CD4-positive, alpha-beta memory T cell (primary cell): ENCODE measurements at regions of chr18 and their contacts with region 1.

Region 1: DNA sequence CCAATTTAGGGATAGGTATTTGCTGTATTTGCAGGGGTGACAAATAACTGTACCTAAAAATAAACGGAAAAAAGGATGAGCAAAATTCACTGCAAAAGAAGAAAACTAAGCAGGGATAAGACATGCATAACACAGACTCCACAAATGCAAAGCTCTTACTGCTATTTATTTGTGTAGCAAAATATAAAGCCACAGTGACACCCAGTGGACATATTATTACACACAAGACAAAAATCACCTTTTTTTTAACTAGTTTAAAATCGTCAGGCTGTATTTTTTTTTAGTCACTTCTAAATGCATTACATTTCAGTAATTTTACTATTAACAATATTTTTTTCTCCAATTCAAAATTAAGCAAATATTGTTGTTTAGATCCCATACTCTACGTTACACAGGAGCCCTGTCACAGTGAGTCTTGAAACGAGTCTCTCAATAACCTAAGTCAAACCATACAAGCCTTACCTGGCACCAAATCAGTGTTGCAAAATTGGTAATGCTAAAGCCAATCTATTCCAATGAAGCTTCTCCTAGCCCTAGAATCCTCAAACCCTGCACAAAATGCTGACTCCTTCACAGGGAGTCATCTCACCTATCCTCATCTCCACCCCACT is 23.7 kb downstream of the METTL4 start:
- DNase-seq: peak in 4 of 5 donors; percentile 31 to 40 (median 40)
- H3K4me3 ChIP-seq: no peak overlapping the region
- H3K4me3 Mint-ChIP-seq: no peak overlapping the region
- H3K27ac ChIP-seq: no peak overlapping the region
- H3K27ac Mint-ChIP-seq: peak overlapping the region in 3 of 7 donors; percentile 20 to 49 (median 48)
- H3K4me1 ChIP-seq: no peaks in the 10 kb centered on the region
- H3K4me1 Mint-ChIP-seq: peaks cover 14 to 17% (median 15%) of the 10 kb centered on the region in 4 donors
- H3K27me3 ChIP-seq: no peaks in the 10 kb centered on the region
- H3K27me3 Mint-ChIP-seq: no peaks in the 10 kb centered on the region

Region 2: DNA sequence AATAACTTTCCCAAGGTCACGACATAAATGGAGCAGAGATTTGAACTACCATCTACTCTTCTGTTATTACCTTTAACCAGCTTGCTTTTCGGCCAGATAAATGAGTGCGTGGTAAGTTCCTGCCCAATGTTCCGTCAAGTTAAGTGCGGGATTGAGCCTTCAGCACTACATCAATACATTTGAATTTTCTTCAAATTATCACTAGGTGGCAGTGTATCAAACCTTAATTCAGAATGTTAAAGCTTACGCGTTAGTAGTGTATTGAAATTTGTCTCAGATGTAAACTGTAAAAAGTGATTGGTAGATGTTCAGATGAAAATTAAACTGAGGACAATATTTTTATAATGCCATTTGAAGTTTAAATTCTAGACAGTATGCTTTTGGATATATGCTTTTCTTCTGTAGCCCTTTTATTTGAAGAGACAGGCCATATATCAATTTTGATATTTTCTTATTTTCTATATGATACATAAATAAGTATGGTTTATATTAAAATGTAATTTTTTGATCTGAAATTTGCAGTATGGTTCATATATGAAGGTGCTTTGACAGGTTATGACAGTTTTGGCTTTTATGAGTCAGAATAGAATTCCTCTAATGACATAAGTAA is 961.6 kb before region 1 on chr18:
- CTCF ChIA-PET with region 1: interaction called, 5 read pairs
- POLR2A ChIA-PET with region 1: no interaction called
- intact Hi-C with region 1: loop called (anchors 1 kb)
- DNase-seq: peak in 1 of 5 donors; percentile 2
- H3K4me3 ChIP-seq: no peak overlapping the region
- H3K4me3 Mint-ChIP-seq: no peak overlapping the region
- H3K27ac ChIP-seq: no peak overlapping the region
- H3K27ac Mint-ChIP-seq: no peak overlapping the region
- H3K4me1 ChIP-seq: no peaks in the 10 kb centered on the region
- H3K4me1 Mint-ChIP-seq: peaks cover 0 to 2% (median 0%) of the 10 kb centered on the region in 4 donors
- H3K27me3 ChIP-seq: no peaks in the 10 kb centered on the region
- H3K27me3 Mint-ChIP-seq: peaks cover 2 to 3% of the 10 kb centered on the region in 2 donors

Region 3: DNA sequence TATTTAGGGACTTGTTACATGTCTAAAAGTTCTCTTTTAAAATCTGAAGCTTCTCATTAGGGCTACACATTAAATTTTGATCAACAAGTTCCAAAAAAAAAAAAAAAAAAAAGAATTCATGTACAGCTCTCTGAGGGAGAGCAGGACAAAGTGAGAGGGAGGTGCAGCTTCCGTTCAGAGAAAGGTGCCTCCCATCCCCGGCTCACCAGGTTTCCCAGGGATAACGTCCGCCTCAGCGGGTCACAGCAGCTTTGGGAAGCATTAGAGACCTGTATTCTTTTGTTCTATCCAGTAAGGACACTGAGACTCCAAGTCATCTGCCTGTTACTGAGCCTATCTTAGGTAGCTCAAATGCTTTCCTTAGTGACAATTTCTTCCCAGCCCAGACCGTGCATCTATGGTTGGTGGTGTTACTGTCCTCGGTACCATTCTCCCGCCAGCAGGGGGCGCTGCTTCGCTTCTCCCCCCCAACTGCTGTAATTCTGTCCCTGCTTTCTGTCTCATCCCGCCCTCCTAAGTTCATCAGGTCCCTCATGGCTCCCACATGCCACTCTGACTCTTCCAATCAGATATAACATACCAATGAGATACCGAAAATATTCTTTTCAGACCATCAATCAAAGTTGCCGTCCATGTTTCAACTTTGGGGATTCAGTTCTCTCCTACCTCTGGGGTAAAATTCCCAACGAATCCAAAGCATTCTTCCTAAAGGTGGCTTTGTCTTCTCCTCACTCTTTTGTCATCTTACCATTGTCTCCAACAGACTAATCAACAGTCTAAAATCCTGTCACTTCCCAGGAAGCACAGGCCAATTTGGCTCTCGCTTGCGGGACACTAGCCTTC is 442.7 kb before region 1 on chr18:
- CTCF ChIA-PET with region 1: interaction called, 29 read pairs
- POLR2A ChIA-PET with region 1: no interaction called
- intact Hi-C with region 1: loop called (anchors 1 kb)
- DNase-seq: peak in 4 of 5 donors; percentile 10 to 20 (median 17)
- H3K4me3 ChIP-seq: no peak overlapping the region
- H3K4me3 Mint-ChIP-seq: no peak overlapping the region
- H3K27ac ChIP-seq: no peak overlapping the region
- H3K27ac Mint-ChIP-seq: no peak overlapping the region
- H3K4me1 ChIP-seq: no peaks in the 10 kb centered on the region
- H3K4me1 Mint-ChIP-seq: peaks cover 0 to 7% (median 1%) of the 10 kb centered on the region in 4 donors
- H3K27me3 ChIP-seq: no peaks in the 10 kb centered on the region
- H3K27me3 Mint-ChIP-seq: peaks cover 8 to 10% of the 10 kb centered on the region in 2 donors

Region 4: DNA sequence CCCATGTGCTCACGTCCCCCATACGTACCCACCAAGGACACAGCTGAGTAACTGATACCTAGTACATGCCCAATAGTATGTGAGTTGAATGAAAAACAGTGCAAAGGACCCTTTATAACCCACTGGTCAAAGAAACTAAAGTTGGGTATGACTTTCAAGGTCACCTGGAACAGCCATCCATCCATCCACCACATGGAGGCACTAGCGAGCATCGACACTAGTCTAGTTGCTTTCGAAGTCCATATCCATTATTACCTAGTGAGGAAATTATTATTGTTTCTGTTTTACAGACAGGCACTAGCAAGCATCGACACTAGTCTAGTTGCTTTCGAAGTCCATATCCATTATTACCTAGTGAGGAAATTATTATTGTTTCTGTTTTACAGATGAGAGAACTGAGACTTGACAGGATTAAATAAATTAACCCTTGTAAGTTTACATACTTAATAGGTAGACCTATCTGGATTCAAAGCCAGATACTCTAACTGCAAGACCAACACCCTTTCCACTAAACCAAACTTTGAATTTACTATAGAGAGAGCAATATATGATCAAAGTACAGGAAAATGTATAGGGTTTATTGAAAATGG is 209.9 kb before region 1 on chr18:
- CTCF ChIA-PET with region 1: interaction called, 33 read pairs
- POLR2A ChIA-PET with region 1: no interaction called
- intact Hi-C with region 1: loop called (anchors 1 kb)
- DNase-seq: peak; percentile 18 to 46 (median 36)
- H3K4me3 ChIP-seq: no peak overlapping the region
- H3K4me3 Mint-ChIP-seq: no peak overlapping the region
- H3K27ac ChIP-seq: no peak overlapping the region
- H3K27ac Mint-ChIP-seq: no peak overlapping the region
- H3K4me1 ChIP-seq: no peaks in the 10 kb centered on the region
- H3K4me1 Mint-ChIP-seq: no peaks in the 10 kb centered on the region
- H3K27me3 ChIP-seq: no peaks in the 10 kb centered on the region
- H3K27me3 Mint-ChIP-seq: peaks cover 11 to 26% of the 10 kb centered on the region in 2 donors